Transverse colon (tissue), 4 donors: ENCODE measurements at regions of chr16 and their contacts with region 1.

Region 1: GRCh38 chr16:31754998-31755615 is 118.5 kb upstream of the ZNF267 start:
- DNase-seq: no peak
- H3K4me3 ChIP-seq: no peak overlapping the region
- H3K27ac ChIP-seq: no peak overlapping the region
- H3K4me1 ChIP-seq: no peaks in the 10 kb centered on the region
- H3K27me3 ChIP-seq: no peaks in the 10 kb centered on the region
- CTCF ChIP-seq: no peak
- EP300 ChIP-seq: no peak
- POLR2A ChIP-seq: no peak

Region 2: GRCh38 chr16:31876951-31877828 is 122.1 kb after region 1 on chr16:
- in situ Hi-C with region 1: no loop called
- intact Hi-C with region 1: no loop called
- DNase-seq: no peak
- H3K4me3 ChIP-seq: no peak overlapping the region
- H3K27ac ChIP-seq: peak overlapping the region; percentile 9 to 66 (median 54)
- H3K4me1 ChIP-seq: peaks cover 30 to 70% (median 49%) of the 10 kb centered on the region in 4 donors
- H3K27me3 ChIP-seq: no peaks in the 10 kb centered on the region
- CTCF ChIP-seq: no peak
- EP300 ChIP-seq: no peak
- POLR2A ChIP-seq: no peak

Region 3: DNA sequence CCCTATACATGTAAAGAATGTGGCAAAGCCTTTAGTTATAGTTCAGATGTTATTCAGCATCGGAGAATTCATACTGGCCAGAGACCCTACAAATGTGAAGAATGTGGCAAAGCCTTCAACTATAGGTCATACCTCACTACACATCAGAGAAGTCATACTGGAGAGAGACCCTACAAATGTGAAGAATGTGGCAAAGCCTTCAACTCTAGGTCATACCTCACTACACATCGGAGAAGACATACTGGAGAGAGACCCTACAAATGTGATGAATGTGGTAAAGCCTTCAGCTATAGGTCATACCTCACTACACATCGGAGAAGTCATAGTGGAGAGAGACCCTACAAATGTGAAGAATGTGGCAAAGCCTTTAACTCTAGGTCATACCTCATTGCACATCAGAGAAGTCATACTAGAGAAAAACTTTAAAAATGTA is 161.0 kb after region 1 on chr16:
- in situ Hi-C with region 1: loop called in 1 of 4 experiments (anchors 25 kb)
- intact Hi-C with region 1: no loop called
- DNase-seq: no peak
- H3K4me3 ChIP-seq: no peak overlapping the region
- H3K27ac ChIP-seq: no peak overlapping the region
- H3K4me1 ChIP-seq: no peaks in the 10 kb centered on the region
- H3K27me3 ChIP-seq: no peaks in the 10 kb centered on the region
- CTCF ChIP-seq: no peak
- EP300 ChIP-seq: no peak
- POLR2A ChIP-seq: no peak